Activated CD4-positive, alpha-beta T cell treated with anti-CD3 and anti-CD28 coated beads for 36 hours (primary cell): ENCODE measurements at regions of chr5 and their contacts with region 1.

Region 1: GRCh38 chr5:143824851-143825720 is 13.1 kb downstream of the HMHB1 start:
- DNase-seq: peak; percentile 91
- ATAC-seq: peak; percentile 70
- H3K4me3 Mint-ChIP-seq: no peak overlapping the region
- H3K27ac Mint-ChIP-seq: no peak overlapping the region
- H3K4me1 Mint-ChIP-seq: peaks cover 18% of the 10 kb centered on the region
- H3K27me3 Mint-ChIP-seq: peaks cover 2% of the 10 kb centered on the region

Region 2: GRCh38 chr5:142922223-142922952 is 902.7 kb before region 1 on chr5:
- CTCF ChIA-PET with region 1: no interaction called
- POLR2A ChIA-PET with region 1: no interaction called
- intact Hi-C with region 1: loop called (anchors 1 to 2 kb)
- DNase-seq: no peak
- ATAC-seq: no peak
- H3K4me3 Mint-ChIP-seq: no peak overlapping the region
- H3K27ac Mint-ChIP-seq: no peak overlapping the region
- H3K4me1 Mint-ChIP-seq: peaks cover 23% of the 10 kb centered on the region
- H3K27me3 Mint-ChIP-seq: no peaks in the 10 kb centered on the region

Region 3: GRCh38 chr5:143008809-143009521 is 816.1 kb before region 1 on chr5:
- CTCF ChIA-PET with region 1: interaction called, 15 read pairs
- POLR2A ChIA-PET with region 1: no interaction called
- intact Hi-C with region 1: loop called in 1 of 2 experiments (anchors 2 kb)
- DNase-seq: peak; percentile 87
- ATAC-seq: peak; percentile 91
- H3K4me3 Mint-ChIP-seq: peak overlapping the region; percentile 34
- H3K27ac Mint-ChIP-seq: peak overlapping the region; percentile 83
- H3K4me1 Mint-ChIP-seq: peaks cover 56% of the 10 kb centered on the region
- H3K27me3 Mint-ChIP-seq: no peaks in the 10 kb centered on the region

Region 4: DNA sequence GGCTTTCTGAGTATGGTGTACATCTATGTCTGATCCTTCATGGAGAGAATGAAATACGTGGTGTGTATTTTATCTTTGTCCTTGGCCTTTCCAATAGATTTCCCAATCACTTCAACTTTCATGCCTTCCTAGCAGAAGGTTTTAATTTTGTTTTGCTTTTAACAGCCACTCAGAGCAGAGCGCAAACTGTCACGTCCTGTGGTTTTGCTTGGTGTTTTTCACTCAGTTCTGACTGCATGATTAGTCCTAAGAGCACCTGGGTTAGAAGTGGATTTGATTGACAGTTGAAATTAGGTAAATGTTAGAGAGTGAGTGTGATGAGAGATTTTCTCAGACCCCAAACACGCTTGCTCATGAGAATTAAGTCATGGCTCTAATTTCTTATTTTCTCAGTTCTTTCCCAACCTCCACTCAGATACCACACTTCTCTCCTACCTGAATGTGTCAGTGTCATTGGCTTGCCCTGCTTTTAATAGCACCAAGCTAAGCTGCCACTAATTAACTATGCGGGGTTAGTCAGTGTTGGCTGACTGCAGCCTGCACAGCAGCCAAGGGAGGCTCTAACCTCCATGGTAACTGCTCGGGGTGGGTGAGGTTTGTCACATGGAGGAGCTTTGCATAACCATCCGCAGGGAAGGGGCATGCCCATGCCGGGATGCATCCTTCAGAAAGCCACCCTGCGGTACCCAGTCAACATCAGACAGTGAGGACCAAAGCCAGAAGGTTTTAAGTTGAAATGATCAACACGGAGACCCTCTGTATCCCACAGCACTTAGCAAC is 595.0 kb before region 1 on chr5:
- CTCF ChIA-PET with region 1: no interaction called
- POLR2A ChIA-PET with region 1: no interaction called
- intact Hi-C with region 1: loop called (anchors 5 to 10 kb)
- DNase-seq: peak; percentile 74
- ATAC-seq: peak; percentile 91
- H3K4me3 Mint-ChIP-seq: peak overlapping the region; percentile 35
- H3K27ac Mint-ChIP-seq: peak overlapping the region; percentile 86
- H3K4me1 Mint-ChIP-seq: peaks cover 26% of the 10 kb centered on the region
- H3K27me3 Mint-ChIP-seq: no peaks in the 10 kb centered on the region

Region 5: DNA sequence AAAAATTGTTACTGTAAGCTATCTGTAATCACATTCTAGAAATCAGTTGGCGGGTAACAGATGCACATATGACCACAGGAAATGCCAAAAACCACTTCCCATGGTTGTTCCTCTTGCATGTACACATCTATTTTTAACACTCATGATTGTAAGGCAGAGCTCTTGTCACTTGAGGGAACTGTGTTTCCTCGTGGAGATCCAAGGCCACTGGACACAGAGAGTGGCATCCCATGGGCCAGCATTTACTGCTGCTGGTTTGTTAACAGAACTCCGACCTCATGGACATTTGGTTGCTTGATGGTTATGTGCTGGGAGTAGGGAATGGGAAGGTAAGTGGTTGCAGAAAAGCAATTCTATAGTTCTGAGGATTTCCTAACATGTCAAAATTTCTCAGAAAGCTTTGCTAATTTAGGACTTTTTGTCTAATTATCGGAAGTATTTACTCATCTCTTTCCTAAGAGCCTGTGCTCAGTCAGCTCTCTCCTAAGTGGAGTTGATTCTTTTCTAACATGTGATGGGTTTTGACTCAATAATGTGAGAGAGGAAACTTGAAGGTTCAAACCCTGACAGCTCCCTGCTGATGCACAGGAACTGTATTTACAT is 219.6 kb before region 1 on chr5:
- CTCF ChIA-PET with region 1: no interaction called
- POLR2A ChIA-PET with region 1: no interaction called
- intact Hi-C with region 1: loop called (anchors 5 kb)
- DNase-seq: peak; percentile 55
- ATAC-seq: peak; percentile 58
- H3K4me3 Mint-ChIP-seq: peak overlapping the region; percentile 34
- H3K27ac Mint-ChIP-seq: peak overlapping the region; percentile 91
- H3K4me1 Mint-ChIP-seq: peaks cover 35% of the 10 kb centered on the region
- H3K27me3 Mint-ChIP-seq: peaks cover 4% of the 10 kb centered on the region

Region 6: GRCh38 chr5:143698574-143698973 is 126.5 kb before region 1 on chr5:
- CTCF ChIA-PET with region 1: no interaction called
- POLR2A ChIA-PET with region 1: no interaction called
- intact Hi-C with region 1: loop called in 1 of 2 experiments (anchors 5 kb)
- DNase-seq: peak; percentile 29
- ATAC-seq: peak; percentile 20
- H3K4me3 Mint-ChIP-seq: no peak overlapping the region
- H3K27ac Mint-ChIP-seq: peak overlapping the region; percentile 52
- H3K4me1 Mint-ChIP-seq: peaks cover 20% of the 10 kb centered on the region
- H3K27me3 Mint-ChIP-seq: peaks cover 2% of the 10 kb centered on the region

Region 7: GRCh38 chr5:143767162-143767561 is 57.9 kb before region 1 on chr5:
- CTCF ChIA-PET with region 1: no interaction called
- POLR2A ChIA-PET with region 1: no interaction called
- intact Hi-C with region 1: no loop called
- DNase-seq: no peak
- ATAC-seq: no peak
- H3K4me3 Mint-ChIP-seq: no peak overlapping the region
- H3K27ac Mint-ChIP-seq: no peak overlapping the region
- H3K4me1 Mint-ChIP-seq: no peaks in the 10 kb centered on the region
- H3K27me3 Mint-ChIP-seq: peaks cover 15% of the 10 kb centered on the region

Region 8: GRCh38 chr5:144183254-144183889 is 358.3 kb after region 1 on chr5:
- CTCF ChIA-PET with region 1: no interaction called
- POLR2A ChIA-PET with region 1: no interaction called
- intact Hi-C with region 1: loop called in 1 of 2 experiments (anchors 2 kb)
- DNase-seq: no peak
- ATAC-seq: no peak
- H3K4me3 Mint-ChIP-seq: no peak overlapping the region
- H3K27ac Mint-ChIP-seq: no peak overlapping the region
- H3K4me1 Mint-ChIP-seq: peaks cover 38% of the 10 kb centered on the region
- H3K27me3 Mint-ChIP-seq: no peaks in the 10 kb centered on the region